IMR-90 (cell line): ENCODE measurements at regions of chr11 and their contacts with region 1.

Region 1: GRCh38 chr11:77411717-77412441 is 62.0 kb downstream of the PAK1 start:
- DNase-seq: peak; percentile 82
- ATAC-seq: peak; percentile 96
- H3K4me3 ChIP-seq: peak overlapping the region; percentile 73
- H3K27ac ChIP-seq: peak overlapping the region; percentile 35; the same call in 1 of the 2 replicates
- H3K4me1 ChIP-seq: peaks cover 14% of the 10 kb centered on the region
- H3K27me3 ChIP-seq: no peaks in the 10 kb centered on the region
- CTCF ChIP-seq: peak; percentile 20; the same call in 1 of the 2 replicates
- POLR2A ChIP-seq: no peak
- RAD21 ChIP-seq: peak; percentile 30

Region 2: GRCh38 chr11:77198440-77198849 is 213.4 kb before region 1 on chr11:
- CTCF ChIA-PET with region 1: interaction called, 4 read pairs
- POLR2A ChIA-PET with region 1: interaction called, 3 read pairs
- dilution Hi-C with region 1: no loop called
- in situ Hi-C with region 1: no loop called
- intact Hi-C with region 1: loop called (anchors 5 kb)
- DNase-seq: peak; percentile 10
- ATAC-seq: no peak
- H3K4me3 ChIP-seq: no peak overlapping the region
- H3K27ac ChIP-seq: no peak overlapping the region
- H3K4me1 ChIP-seq: no peaks in the 10 kb centered on the region
- H3K27me3 ChIP-seq: no peaks in the 10 kb centered on the region; the same call in 1 of the 2 replicates
- CTCF ChIP-seq: peak; percentile 22; the same call in 1 of the 2 replicates
- POLR2A ChIP-seq: no peak
- RAD21 ChIP-seq: no peak

Region 3: DNA sequence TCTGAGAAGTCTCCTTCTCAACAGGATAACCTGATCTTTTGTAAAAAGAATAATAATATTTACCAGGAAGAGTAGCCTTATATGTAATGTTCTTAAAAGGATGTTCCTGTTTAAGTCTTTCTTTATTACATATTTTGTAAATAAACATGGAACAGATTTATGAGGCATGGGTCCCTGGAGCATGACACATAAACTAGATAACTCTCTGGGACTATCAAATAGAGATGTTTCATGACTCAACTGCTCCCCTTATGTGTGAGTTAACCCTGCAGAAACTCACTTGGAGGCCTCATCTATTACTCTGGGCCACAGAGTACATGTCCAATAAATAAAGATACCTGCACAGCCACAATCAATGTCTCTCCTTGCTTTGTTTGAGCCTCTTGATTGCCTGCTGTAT is 175.0 kb before region 1 on chr11:
- CTCF ChIA-PET with region 1: no interaction called
- POLR2A ChIA-PET with region 1: no interaction called
- dilution Hi-C with region 1: no loop called
- in situ Hi-C with region 1: no loop called
- intact Hi-C with region 1: loop called (anchors 10 kb)
- DNase-seq: peak; percentile 66
- ATAC-seq: peak; percentile 84
- H3K4me3 ChIP-seq: no peak overlapping the region
- H3K27ac ChIP-seq: no peak overlapping the region
- H3K4me1 ChIP-seq: no peaks in the 10 kb centered on the region
- H3K27me3 ChIP-seq: no peaks in the 10 kb centered on the region
- CTCF ChIP-seq: no peak
- POLR2A ChIP-seq: no peak
- RAD21 ChIP-seq: no peak